Activated CD4-positive, alpha-beta memory T cell treated with anti-CD3 and anti-CD28 coated beads for 36 hours (primary cell): ENCODE measurements at regions of chr7 and their contacts with region 1.

Region 1: DNA sequence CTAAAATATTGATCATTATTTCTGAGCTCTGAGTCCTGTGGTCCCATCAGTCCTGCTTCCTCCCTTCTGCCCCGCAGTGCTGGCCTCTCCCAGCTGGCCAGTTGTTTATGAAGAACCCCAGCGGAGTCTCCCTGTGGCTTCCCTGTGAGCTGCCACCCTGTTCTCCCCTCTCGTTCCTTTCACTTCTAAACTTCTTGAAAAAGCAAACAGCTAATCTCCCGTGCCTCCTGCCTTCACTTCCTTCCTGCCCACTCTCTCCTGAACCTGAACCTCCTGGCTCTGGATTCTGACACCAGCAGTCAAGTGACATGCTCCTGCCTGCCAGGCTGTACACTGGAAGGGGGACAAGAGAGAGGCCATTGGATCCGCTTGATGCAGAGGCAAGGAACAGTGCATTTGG is 63.7 kb upstream of the ZPBP start:
- DNase-seq: no peak
- H3K4me3 Mint-ChIP-seq: peak overlapping the region; percentile 49
- H3K27ac Mint-ChIP-seq: peak overlapping the region; percentile 70
- H3K4me1 Mint-ChIP-seq: peaks cover 34% of the 10 kb centered on the region
- H3K27me3 Mint-ChIP-seq: no peaks in the 10 kb centered on the region

Region 2: DNA sequence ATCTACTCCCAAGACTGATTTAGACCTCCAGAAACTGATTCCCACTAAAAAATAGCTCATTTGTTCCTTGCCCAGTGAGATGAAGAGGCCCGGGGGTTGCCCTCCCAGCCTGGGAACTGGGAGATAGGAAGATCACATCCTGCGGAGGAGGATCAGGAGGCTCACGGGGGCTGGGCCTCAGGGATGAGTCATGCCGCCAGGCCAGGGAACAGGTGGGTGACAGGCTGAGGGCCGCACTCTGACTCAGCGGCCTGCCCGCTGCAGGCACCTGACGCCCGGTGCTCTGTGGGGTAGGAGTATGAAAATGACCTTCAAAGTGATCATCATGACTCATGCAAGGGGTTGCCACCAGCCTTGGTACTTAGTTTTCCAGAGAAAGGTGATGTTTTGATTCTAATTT is 40.8 kb after region 1 on chr7:
- CTCF ChIA-PET with region 1: interaction called, 3 read pairs
- POLR2A ChIA-PET with region 1: no interaction called
- intact Hi-C with region 1: loop called (anchors 1 kb)
- DNase-seq: peak; percentile 90
- H3K4me3 Mint-ChIP-seq: peak overlapping the region; percentile 13
- H3K27ac Mint-ChIP-seq: peak overlapping the region; percentile 58
- H3K4me1 Mint-ChIP-seq: peaks cover 34% of the 10 kb centered on the region
- H3K27me3 Mint-ChIP-seq: peaks cover 2% of the 10 kb centered on the region

Region 3: DNA sequence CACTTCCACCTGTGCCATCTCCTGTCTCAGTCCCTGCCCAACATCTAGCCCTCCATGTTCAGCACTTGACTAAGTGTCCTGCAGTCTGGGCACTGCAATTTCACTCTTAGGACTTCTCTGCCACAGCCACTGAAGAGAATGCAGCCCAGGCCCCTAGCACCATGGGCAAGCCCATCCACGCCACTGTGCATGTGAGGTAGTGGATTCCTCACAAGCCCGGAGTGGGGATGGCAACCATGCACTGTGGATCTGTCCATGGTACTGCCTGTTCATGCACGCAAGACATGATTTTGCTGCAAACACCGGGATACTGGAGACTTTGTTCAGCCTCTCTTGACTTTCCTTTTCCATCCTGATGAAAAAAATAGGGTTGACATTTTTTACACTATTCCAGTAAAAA is 396.2 kb after region 1 on chr7:
- CTCF ChIA-PET with region 1: no interaction called
- POLR2A ChIA-PET with region 1: no interaction called
- intact Hi-C with region 1: no loop called
- DNase-seq: no peak
- H3K4me3 Mint-ChIP-seq: no peak overlapping the region
- H3K27ac Mint-ChIP-seq: no peak overlapping the region
- H3K4me1 Mint-ChIP-seq: peaks cover 4% of the 10 kb centered on the region
- H3K27me3 Mint-ChIP-seq: peaks cover 10% of the 10 kb centered on the region